ENCODE measurements at regions of chr6 and their contacts with region 1.

Region 1: GRCh38 chr6:43013843-43014433 is at the starts of genes KLHDC3 and MEA1:
- H3K4me3 ChIP-seq: peak within 1 kb of the TSS; percentile 70
- H3K27ac ChIP-seq: peak within 1 kb of the TSS; percentile 76
- H3K4me1 ChIP-seq: peaks cover 12% of the 10 kb centered on the region
- CTCF ChIP-seq: no peak

Region 2: GRCh38 chr6:42963855-42964605 is 49.9 kb before region 1 on chr6:
- CTCF ChIA-PET with region 1: interaction called, 11 read pairs
- POLR2A ChIA-PET with region 1: interaction called, 4 read pairs
- H3K4me3 ChIP-seq: no peak overlapping the region
- H3K27ac ChIP-seq: no peak overlapping the region; the same call in 1 of the 2 replicates
- H3K4me1 ChIP-seq: 0 out of 2 replicates have a peak, but pooled peaks cover 4% of the 10 kb centered on the region
- CTCF ChIP-seq: 0 out of 2 replicates have a peak, but pooled peaks have one; percentile 15

Region 3: GRCh38 chr6:42978839-42979522 is 35.0 kb before region 1 on chr6 and contains the start of gene PEX6:
- CTCF ChIA-PET with region 1: interaction called, 3 read pairs
- POLR2A ChIA-PET with region 1: interaction called, 56 read pairs
- H3K4me3 ChIP-seq: peak within 1 kb of the TSS; percentile 88
- H3K27ac ChIP-seq: peak within 1 kb of the TSS; percentile 84
- H3K4me1 ChIP-seq: no peaks in the 10 kb centered on the region
- CTCF ChIP-seq: no peak

Region 4: GRCh38 chr6:42996513-42996912 is 17.4 kb before region 1 on chr6:
- CTCF ChIA-PET with region 1: interaction called, 4 read pairs
- POLR2A ChIA-PET with region 1: interaction called, 38 read pairs
- H3K4me3 ChIP-seq: no peak overlapping the region
- H3K27ac ChIP-seq: no peak overlapping the region
- H3K4me1 ChIP-seq: no peaks in the 10 kb centered on the region
- CTCF ChIP-seq: no peak

Region 5: GRCh38 chr6:43053545-43054205 is 39.7 kb after region 1 on chr6 and contains the start of gene CUL7:
- CTCF ChIA-PET with region 1: interaction called, 3 read pairs
- POLR2A ChIA-PET with region 1: interaction called, 50 read pairs
- H3K4me3 ChIP-seq: peak within 1 kb of the TSS; percentile 74
- H3K27ac ChIP-seq: peak within 1 kb of the TSS; percentile 85
- H3K4me1 ChIP-seq: peaks cover 9% of the 10 kb centered on the region
- CTCF ChIP-seq: peak; percentile 77; the same call in 1 of the 2 replicates

Region 6: DNA sequence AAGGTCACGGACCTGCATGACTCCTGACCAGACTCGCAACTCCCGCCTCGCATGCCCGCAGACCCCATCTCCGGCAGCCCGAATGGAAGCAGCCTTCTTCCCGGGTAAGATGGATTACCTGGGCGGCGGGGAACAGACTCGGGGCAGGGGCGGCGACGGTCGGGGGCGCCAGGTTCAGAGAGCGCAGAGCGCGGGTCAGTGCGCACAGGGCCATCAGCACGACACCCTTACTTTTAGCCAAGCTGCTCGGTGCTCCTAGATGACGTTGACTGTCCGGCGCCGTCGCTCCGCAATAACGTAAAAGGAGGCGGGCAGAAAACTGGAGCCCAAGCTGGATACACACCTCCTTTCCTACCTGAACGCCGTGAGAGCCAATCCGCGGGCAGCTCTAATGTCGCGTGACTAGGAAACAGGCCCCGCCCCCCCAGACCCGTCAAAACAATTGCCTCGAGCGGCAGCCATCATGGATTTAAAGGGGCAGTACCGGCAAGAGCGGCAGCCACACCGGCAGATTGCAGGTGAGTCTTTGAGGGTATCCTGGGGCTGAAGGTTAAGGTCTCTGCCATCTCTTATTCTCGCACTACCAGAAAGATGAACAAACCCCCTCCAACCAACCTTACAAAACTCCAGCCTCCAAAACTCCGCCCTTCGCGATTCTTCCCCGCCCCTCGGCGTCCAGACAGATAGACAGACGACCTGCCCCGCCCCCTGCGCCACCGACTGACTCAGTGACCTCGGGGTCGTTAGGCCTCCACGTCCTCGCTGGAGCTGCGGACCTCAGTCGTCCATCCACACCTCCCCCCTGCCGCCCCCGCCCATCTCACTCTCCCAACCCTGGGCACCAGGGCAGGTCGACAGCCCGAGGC is 45.5 kb after region 1 on chr6 and contains the starts of genes KLC4 and MRPL2:
- CTCF ChIA-PET with region 1: no interaction called
- POLR2A ChIA-PET with region 1: interaction called, 50 read pairs
- H3K4me3 ChIP-seq: peak within 1 kb of the TSS; percentile 96
- H3K27ac ChIP-seq: peak within 1 kb of the TSS; percentile 76
- H3K4me1 ChIP-seq: peaks cover 9% of the 10 kb centered on the region
- CTCF ChIP-seq: no peak

Region 7: DNA sequence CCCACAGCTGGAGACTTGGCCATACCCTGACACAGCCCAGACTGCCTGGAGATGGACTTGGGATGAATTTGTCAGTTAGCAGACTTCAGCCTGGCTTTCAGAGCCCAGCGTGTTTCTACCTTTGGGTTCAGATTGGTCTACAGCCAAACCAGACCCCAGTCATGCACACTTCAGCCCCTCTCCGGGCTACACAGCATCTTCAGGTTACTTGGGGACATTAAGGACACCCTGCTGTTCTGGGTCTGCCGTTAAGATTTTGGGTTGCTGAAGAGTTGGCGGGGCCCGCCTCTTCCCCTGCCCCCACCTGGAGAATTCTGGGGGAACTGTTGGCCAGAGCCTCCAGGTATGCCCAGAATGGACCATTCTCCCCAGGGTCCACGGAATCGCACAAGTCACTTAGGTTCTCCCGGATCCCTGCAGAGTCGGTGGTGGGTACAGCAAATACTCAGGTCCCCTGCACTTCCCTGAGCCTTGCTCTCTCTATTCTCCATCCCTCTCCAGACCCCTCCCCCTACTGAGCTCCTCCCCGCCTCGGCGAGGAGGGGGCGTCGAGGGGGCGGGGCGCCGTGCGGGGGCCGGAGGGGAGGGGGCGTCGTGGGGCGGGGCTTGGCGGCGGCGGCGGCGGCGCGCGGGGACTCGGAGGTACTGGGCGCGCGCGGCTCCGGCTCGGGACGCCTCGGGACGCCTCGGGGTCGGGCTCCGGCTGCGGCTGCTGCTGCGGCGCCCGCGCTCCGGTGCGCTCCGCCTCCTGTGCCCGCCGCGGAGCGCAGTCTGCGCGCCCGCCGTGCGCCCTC is 61.9 kb after region 1 on chr6 and contains the start of gene PTK7:
- CTCF ChIA-PET with region 1: interaction called, 4 read pairs
- POLR2A ChIA-PET with region 1: interaction called, 11 read pairs
- H3K4me3 ChIP-seq: peak within 1 kb of the TSS; percentile 88
- H3K27ac ChIP-seq: peak within 1 kb of the TSS; percentile 87
- H3K4me1 ChIP-seq: peaks cover 14% of the 10 kb centered on the region
- CTCF ChIP-seq: no peak